Ovary (tissue), 10 donors: ENCODE measurements at regions of chr12 and their contacts with region 1.

Region 1: GRCh38 chr12:80053048-80053790 is 46.1 kb upstream of the OTOGL start:
- DNase-seq: peak; percentile 8 to 50 (median 45)
- H3K4me3 ChIP-seq: no peak overlapping the region
- H3K27ac ChIP-seq: no peak overlapping the region
- H3K4me1 ChIP-seq: peaks cover 2% of the 10 kb centered on the region
- H3K27me3 ChIP-seq: no peaks in the 10 kb centered on the region
- CTCF ChIP-seq: no peak
- EP300 ChIP-seq: no peak
- POLR2A ChIP-seq: no peak

Region 2: GRCh38 chr12:79674629-79675028 is 378.6 kb before region 1 on chr12:
- intact Hi-C with region 1: no loop called
- DNase-seq: no peak
- H3K4me3 ChIP-seq: no peak overlapping the region
- H3K27ac ChIP-seq: no peak overlapping the region
- H3K4me1 ChIP-seq: peaks cover 6% of the 10 kb centered on the region
- H3K27me3 ChIP-seq: no peaks in the 10 kb centered on the region
- CTCF ChIP-seq: no peak
- EP300 ChIP-seq: no peak
- POLR2A ChIP-seq: no peak

Region 3: GRCh38 chr12:79935021-79935623 is 118.1 kb before region 1 on chr12 and contains the start of gene PPP1R12A:
- intact Hi-C with region 1: loop called in 1 of 4 experiments (anchors 10 kb)
- DNase-seq: peak; percentile 96 to 97 (median 97)
- H3K4me3 ChIP-seq: peak within 1 kb of the TSS; percentile 85
- H3K27ac ChIP-seq: peak within 1 kb of the TSS; percentile 89 to 94
- H3K4me1 ChIP-seq: no peaks in the 10 kb centered on the region
- H3K27me3 ChIP-seq: no peaks in the 10 kb centered on the region
- CTCF ChIP-seq: peak in 1 of 3 donors; percentile 40
- EP300 ChIP-seq: no peak
- POLR2A ChIP-seq: peak; percentile 97
- total RNA-seq, gene PPP1R12A: 62.5 to 104 (median 75.3) TPM